MCF 10A (cell line): ENCODE measurements at regions of chr3 and their contacts with region 1.

Region 1: DNA sequence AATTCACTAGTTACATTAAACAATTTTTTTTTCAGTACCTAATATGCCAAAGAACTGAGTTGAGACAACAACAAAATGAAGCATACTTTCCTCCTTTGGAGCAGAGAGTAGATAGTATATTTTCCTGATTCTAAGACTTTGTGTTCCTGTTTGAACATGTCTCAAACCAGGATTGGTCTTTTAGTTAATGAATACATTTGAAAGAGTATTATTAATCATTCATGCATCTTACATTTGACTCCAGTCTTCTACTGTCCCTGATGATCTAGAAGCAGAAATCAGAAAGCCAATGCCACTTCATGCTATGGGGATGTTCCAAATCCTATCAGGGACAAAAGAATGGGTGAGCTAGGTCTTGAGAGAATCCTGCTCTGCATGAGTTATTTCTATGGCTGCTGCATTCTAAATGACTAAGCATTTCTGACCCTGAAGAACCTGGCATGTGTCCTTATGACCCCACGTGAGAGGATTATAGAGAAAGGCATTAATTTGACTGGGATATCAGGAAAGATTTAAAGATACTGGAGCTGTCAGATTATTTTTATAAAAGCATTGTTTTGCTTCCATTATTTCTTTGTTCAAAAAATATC is 32.9 kb upstream of the MBNL1 start:
- DNase-seq: peak; percentile 66
- H3K4me3 Mint-ChIP-seq: no peak overlapping the region
- H3K27ac Mint-ChIP-seq: peak overlapping the region; percentile 42
- H3K4me1 Mint-ChIP-seq: peaks cover 10% of the 10 kb centered on the region
- H3K27me3 Mint-ChIP-seq: no peaks in the 10 kb centered on the region
- CTCF ChIP-seq: no peak

Region 2: GRCh38 chr3:151445273-151446001 is 790.4 kb before region 1 on chr3:
- CTCF ChIA-PET with region 1: no interaction called
- POLR2A ChIA-PET with region 1: no interaction called
- intact Hi-C with region 1: loop called (anchors 5 kb)
- DNase-seq: peak; percentile 86
- H3K4me3 Mint-ChIP-seq: no peak overlapping the region
- H3K27ac Mint-ChIP-seq: no peak overlapping the region
- H3K4me1 Mint-ChIP-seq: peaks cover 12% of the 10 kb centered on the region
- H3K27me3 Mint-ChIP-seq: peaks cover 20% of the 10 kb centered on the region
- CTCF ChIP-seq: no peak